Left colon (tissue), 2 donors: ENCODE measurements at regions of chr16 and their contacts with region 1.

Region 1: DNA sequence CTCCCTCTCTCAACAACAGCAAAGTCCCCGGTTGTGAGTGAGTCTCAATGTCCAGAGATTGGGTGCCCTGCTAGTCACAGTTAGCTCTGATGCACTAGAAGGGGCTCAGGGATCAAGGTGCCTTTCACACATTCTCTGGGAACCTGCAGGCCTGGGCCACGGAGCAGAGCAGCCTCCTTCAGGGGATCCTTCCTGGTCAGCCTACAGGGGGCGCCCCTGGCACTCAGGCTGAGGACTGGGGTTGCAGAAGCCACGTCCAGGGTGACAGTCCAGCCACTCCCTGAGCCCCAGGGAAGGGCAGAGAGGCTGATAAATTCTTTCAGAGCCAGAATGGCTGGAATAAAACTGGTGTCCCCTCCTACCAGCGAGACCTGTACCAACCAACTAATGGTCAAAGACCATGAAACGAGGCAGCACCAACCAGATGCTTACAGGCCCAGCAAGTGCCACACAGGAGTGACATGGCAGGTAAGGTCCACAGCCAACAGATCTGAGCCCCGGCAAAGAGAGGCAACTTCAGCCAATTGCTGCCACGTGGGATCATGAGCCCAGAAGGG is 43.5 kb downstream of the ST3GAL2 start:
- DNase-seq: peak; percentile 83 to 84
- ATAC-seq: peak; percentile 93

Region 2: GRCh38 chr16:70342016-70342415 is 53.4 kb before region 1 on chr16:
- intact Hi-C with region 1: no loop called
- DNase-seq: no peak
- ATAC-seq: no peak

Region 3: GRCh38 chr16:70454222-70455034 is 59.0 kb after region 1 on chr16 and contains the start of gene FCSK:
- intact Hi-C with region 1: loop called in 1 of 2 experiments (anchors 10 kb)
- DNase-seq: peak; percentile 55 to 84
- ATAC-seq: peak; percentile 87
- total RNA-seq, gene FCSK: 36.5 to 48.8 TPM

Region 4: GRCh38 chr16:70508752-70509151 is 113.3 kb after region 1 on chr16:
- intact Hi-C with region 1: no loop called
- DNase-seq: no peak
- ATAC-seq: no peak